Activated naive CD4-positive, alpha-beta T cell treated with anti-CD3 and anti-CD28 coated beads, Interleukin-2, amount 10 ng/mL, durations not matched to agents 7 days and 5 days (primary cell): ENCODE measurements at regions of chr1 and their contacts with region 1.

Region 1: DNA sequence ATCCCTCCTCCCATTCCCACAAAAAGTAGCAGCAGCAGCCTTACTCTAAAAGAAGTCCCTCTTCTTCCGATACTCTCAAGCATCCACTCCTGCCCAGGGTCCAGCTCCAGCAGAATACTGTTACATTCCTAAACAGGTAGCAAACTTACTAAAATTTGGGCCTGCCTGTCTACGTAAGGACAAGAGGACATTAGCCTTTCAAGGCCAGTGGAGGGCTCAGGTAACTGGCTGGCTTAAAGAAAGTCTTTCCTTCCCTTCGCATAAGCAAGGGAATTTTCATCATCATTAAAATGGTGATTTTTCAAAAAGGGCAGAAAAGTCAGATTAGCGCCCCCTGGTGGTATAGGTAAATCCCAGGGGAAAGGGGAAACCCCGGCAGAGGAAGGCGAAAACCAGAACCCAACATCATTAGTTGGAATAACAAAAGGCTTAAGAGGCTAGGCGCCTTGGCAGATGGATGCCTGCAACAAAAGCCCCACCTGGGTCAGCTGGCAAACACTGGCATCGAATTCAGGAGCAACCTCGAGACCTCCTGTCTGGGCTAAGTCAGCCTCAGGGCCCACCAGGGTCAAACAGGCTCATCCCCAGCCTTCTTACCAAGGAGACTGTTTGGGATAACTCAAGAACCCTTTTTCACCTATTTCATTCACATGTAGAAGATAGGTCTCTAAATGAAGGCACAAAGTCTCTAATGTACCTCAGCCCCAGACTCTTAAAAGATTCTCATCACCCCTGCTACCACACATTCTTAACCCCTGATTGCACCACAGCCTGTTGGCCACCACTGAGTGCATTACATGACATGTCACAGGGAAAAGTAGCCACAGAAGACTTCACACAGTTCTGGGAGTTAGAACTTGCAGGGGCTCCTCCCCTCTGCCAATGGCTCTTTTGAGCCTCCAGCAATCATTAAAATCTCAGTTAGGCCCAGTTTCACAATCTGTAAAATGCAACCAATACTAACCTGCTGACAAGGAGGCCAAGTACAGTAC is 36.7 kb downstream of the ERI3 start:
- DNase-seq: peak; percentile 61
- H3K4me3 Mint-ChIP-seq: no peak overlapping the region
- H3K27ac Mint-ChIP-seq: no peak overlapping the region
- H3K4me1 Mint-ChIP-seq: peaks cover 12% of the 10 kb centered on the region
- H3K27me3 Mint-ChIP-seq: no peaks in the 10 kb centered on the region

Region 2: GRCh38 chr1:44305962-44306422 is 12.4 kb before region 1 on chr1:
- CTCF ChIA-PET with region 1: interaction called, 16 read pairs
- DNase-seq: peak; percentile 75
- H3K4me3 Mint-ChIP-seq: peak overlapping the region; percentile 6
- H3K27ac Mint-ChIP-seq: peak overlapping the region; percentile 91
- H3K4me1 Mint-ChIP-seq: peaks cover 50% of the 10 kb centered on the region
- H3K27me3 Mint-ChIP-seq: no peaks in the 10 kb centered on the region

Region 3: GRCh38 chr1:44406737-44407429 is 88.5 kb after region 1 on chr1:
- CTCF ChIA-PET with region 1: no interaction called
- DNase-seq: no peak
- H3K4me3 Mint-ChIP-seq: no peak overlapping the region
- H3K27ac Mint-ChIP-seq: no peak overlapping the region
- H3K4me1 Mint-ChIP-seq: peaks cover 37% of the 10 kb centered on the region
- H3K27me3 Mint-ChIP-seq: peaks cover 52% of the 10 kb centered on the region